PC-9 (cell line): ENCODE measurements at regions of chr10 and their contacts with region 1.

Region 1: DNA sequence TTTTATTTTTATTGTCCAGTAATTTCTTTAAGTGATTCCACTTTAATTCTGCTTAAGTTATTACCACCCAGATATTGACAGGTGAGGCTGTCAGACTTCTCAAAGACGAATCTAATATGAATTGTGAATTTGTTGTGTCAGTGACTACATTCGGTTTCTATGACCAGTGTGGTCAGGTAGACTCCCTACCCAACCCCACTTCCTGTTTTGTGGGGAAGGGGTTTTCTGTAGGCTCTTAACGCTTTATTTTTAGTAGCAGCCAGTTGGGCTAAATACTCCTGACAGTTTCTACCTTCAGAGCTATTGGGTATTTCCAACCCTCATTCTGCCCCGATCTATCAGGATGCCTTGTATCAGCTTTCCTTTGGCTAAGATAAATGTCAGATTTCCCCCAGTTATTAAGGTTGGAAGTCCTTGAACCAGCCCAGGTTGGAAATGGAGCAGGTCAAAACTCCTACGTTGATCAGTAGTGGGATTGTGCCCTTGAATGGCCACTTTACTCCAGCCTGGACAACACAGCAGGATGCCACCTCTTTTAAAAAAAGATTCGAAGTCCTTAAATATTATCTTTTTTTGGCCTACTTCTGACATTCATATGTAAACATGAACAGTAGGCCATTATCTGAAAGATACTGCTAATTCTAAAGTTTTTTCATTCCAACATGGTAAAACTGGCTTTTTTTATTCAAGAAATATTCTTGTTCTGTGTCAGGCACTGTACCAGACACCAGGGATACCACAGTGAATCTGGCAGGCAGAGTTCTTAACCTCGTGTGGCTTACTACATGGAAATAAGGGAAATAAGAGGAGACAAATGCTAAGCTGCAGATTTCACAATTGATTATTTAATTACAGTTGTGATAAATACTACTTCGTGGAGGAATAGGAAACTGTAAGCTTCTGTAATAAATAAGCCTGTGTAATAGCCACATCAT is 133.3 kb upstream of the SAMD8 start:
- DNase-seq: no peak
- H3K4me3 ChIP-seq: no peak overlapping the region
- H3K27ac ChIP-seq: no peak overlapping the region
- H3K4me1 ChIP-seq: no peaks in the 10 kb centered on the region
- H3K27me3 ChIP-seq: no peaks in the 10 kb centered on the region
- CTCF ChIP-seq: no peak

Region 2: DNA sequence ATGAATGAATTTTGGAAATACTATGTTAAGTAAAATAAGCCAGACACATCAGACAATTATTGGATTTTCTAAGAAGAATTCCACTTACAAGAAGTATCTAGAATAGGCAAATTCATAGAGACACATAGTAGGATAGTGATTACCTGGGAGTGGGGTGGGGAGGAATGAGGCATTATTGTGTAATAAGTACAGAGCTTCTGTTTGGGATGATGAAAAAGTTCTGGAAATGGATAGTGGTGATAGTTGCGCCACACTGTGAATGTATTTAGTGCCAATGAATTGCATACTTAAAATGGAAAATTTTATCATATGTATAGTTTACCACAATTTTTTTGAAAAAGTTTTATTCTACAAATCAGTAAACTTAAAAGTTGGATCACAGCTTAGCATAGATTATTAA is 449.0 kb before region 1 on chr10:
- CTCF ChIA-PET with region 1: interaction called, 12 read pairs
- POLR2A ChIA-PET with region 1: no interaction called
- intact Hi-C with region 1: no loop called
- DNase-seq: no peak
- H3K4me3 ChIP-seq: no peak overlapping the region
- H3K27ac ChIP-seq: no peak overlapping the region
- H3K4me1 ChIP-seq: no peaks in the 10 kb centered on the region
- H3K27me3 ChIP-seq: no peaks in the 10 kb centered on the region
- CTCF ChIP-seq: no peak

Region 3: GRCh38 chr10:74598891-74599566 is 379.2 kb before region 1 on chr10:
- CTCF ChIA-PET with region 1: no interaction called
- POLR2A ChIA-PET with region 1: no interaction called
- intact Hi-C with region 1: no loop called
- DNase-seq: no peak
- H3K4me3 ChIP-seq: no peak overlapping the region
- H3K27ac ChIP-seq: no peak overlapping the region
- H3K4me1 ChIP-seq: no peaks in the 10 kb centered on the region
- H3K27me3 ChIP-seq: no peaks in the 10 kb centered on the region
- CTCF ChIP-seq: no peak

Region 4: GRCh38 chr10:74988832-74989561 is 10.8 kb after region 1 on chr10:
- CTCF ChIA-PET with region 1: interaction called, 13 read pairs
- POLR2A ChIA-PET with region 1: no interaction called
- intact Hi-C with region 1: loop called (anchors 2 kb)
- DNase-seq: no peak
- H3K4me3 ChIP-seq: no peak overlapping the region
- H3K27ac ChIP-seq: no peak overlapping the region
- H3K4me1 ChIP-seq: no peaks in the 10 kb centered on the region
- H3K27me3 ChIP-seq: no peaks in the 10 kb centered on the region
- CTCF ChIP-seq: no peak

Region 5: DNA sequence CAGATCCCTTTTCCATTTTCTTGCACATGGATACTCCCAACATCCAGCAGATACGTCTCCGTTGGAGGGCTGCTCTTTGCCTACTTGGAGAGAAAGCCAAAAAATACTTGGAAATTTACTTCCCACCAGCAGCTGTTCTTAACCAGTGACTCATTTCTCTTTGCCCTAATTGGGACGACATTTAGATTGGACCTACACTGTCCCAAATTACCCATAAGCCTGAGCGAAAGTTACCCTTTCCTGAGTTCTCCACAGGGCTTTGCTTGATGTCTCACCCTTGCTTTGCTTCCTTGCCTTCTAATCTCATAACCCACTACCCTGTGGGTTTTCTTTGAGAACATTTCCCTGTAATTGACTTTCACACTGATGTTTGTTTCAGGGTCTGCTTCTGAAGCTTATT is 181.3 kb after region 1 on chr10:
- CTCF ChIA-PET with region 1: no interaction called
- POLR2A ChIA-PET with region 1: interaction called, 11 read pairs
- intact Hi-C with region 1: no loop called
- DNase-seq: no peak
- H3K4me3 ChIP-seq: no peak overlapping the region
- H3K27ac ChIP-seq: no peak overlapping the region
- H3K4me1 ChIP-seq: no peaks in the 10 kb centered on the region
- H3K27me3 ChIP-seq: no peaks in the 10 kb centered on the region
- CTCF ChIP-seq: no peak